ENCODE measurements at regions of chr1 and their contacts with region 1.

Region 1: DNA sequence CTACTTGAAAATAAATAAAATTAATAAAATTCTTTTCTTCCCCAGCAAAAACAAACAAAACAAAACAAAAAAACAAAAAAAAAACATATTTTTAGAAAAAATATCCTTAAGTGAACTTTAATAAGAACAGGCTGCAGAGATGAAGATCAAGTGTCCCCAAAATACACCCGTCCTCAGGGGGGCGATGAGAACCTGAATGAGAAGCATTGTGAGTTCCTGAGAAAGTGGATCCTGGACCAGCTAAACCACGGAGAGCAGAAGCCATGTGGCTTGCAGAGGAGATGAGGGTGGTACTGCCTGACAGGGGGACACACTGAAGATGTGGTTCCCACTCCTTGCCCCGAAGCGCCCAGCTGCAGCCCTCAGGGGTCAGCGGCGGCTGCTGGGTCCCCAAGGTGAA is 89.3 kb downstream of the ITPKB start:
- DNase-seq: no peak
- ATAC-seq: no peak
- H3K4me3 Mint-ChIP-seq: no peak overlapping the region
- H3K27ac Mint-ChIP-seq: peak overlapping the region; percentile 11
- H3K4me1 Mint-ChIP-seq: peaks cover 43% of the 10 kb centered on the region
- H3K27me3 Mint-ChIP-seq: no peaks in the 10 kb centered on the region
- CTCF ChIP-seq: no peak

Region 2: GRCh38 chr1:226702957-226703831 is 53.4 kb after region 1 on chr1:
- CTCF ChIA-PET with region 1: interaction called, 4 read pairs
- POLR2A ChIA-PET with region 1: interaction called, 86 read pairs
- intact Hi-C with region 1: loop called (anchors 1 kb)
- DNase-seq: peak; percentile 90
- ATAC-seq: peak; percentile 90
- H3K4me3 Mint-ChIP-seq: peak overlapping the region; percentile 76
- H3K27ac Mint-ChIP-seq: peak overlapping the region; percentile 93
- H3K4me1 Mint-ChIP-seq: peaks cover 78% of the 10 kb centered on the region
- H3K27me3 Mint-ChIP-seq: no peaks in the 10 kb centered on the region
- CTCF ChIP-seq: no peak

Measured in activated B cell treated with CpG ODN at 0.5 μM for 24 hours (primary cell).